Common myeloid progenitor, CD34-positive (primary cell): ENCODE measurements at regions of chr1 and their contacts with region 1.

Region 1: GRCh38 chr1:23800400-23801337 is at the start of gene GALE:
- DNase-seq: peak; percentile 95 to 97 (median 97)
- H3K4me3 ChIP-seq: peak within 1 kb of the TSS; percentile 57 to 89 (median 81)
- H3K27ac ChIP-seq: peak within 1 kb of the TSS; percentile 64 to 86
- H3K4me1 ChIP-seq: peaks cover 0 to 26% (median 21%) of the 10 kb centered on the region in 4 experiments
- H3K27me3 ChIP-seq: no peaks in the 10 kb centered on the region

Region 2: DNA sequence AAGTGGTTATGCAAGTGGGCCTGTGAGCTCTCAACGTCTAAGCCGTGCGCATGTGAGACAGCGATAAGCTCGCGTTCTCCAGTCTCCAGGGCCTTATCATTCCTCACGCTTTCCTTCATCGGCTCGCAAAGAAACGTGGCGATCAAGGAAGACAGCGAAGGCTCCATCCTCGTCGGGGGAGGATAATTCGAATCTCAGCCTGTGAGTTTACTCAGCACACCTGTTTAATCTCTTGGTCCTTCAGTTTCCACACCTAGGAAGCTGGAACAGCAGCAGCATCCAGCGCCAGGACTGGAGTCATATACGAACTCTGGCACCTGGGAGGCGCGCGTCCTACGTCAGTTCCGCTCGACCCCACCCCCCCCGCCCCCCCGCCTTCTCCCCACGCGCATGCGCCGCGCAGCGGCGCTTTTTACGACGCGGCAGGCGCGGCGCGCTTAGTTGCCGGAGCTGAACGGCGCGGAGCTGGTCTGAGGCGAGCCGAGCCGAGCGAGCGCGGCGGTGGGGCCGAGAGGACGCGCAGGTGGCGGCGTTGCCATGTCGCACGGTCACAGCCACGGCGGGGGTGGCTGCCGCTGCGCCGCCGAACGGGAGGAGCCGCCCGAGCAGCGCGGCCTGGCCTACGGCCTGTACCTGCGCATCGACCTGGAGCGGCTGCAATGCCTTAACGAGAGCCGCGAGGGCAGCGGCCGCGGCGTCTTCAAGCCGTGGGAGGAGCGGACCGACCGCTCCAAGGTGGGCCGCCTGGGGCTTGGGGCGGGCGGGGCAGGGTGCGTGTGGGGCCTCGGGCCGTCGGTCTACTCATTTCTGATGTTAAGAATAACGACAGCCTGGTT is 22.5 kb before region 1 on chr1 and contains the start of gene PITHD1:
- CTCF ChIA-PET with region 1: interaction called, 28 read pairs
- POLR2A ChIA-PET with region 1: interaction called, 6 read pairs
- DNase-seq: peak; percentile 90 to 94 (median 91)
- H3K4me3 ChIP-seq: peak within 1 kb of the TSS; percentile 81 to 95 (median 90)
- H3K27ac ChIP-seq: peak within 1 kb of the TSS; percentile 89 to 95
- H3K4me1 ChIP-seq: peaks cover 10 to 31% (median 19%) of the 10 kb centered on the region in 4 experiments
- H3K27me3 ChIP-seq: no peaks in the 10 kb centered on the region

Region 3: DNA sequence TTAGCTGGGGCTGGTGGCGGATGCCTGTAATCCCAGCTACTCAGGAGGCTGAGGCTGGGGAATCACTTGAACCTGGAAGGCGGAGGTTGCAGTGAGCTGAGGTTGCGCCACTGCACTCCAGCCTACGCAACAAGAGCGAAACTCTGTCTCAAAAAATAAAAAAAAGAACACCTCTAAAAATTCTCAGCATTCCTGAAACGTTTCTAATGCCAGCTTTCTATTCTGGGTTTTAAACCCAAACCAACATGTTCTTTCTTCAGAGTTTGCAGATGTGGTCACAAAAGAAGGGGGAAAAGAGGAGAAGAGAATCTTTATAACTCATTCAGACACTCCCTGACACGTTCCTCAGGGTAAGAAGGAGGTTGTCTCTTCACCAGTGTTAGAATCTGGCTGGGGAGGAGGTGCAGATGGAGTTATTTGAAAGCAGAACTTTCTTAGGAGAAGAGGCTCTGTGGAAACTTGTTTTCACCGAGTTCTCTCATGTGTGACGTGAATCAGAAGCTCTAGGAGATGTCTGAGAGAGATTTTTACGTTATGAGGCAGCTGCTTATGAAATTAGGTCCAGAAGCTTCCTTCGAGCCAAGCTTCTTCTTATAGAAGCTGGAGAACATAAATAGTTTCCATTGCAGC is 130.3 kb after region 1 on chr1:
- CTCF ChIA-PET with region 1: no interaction called
- POLR2A ChIA-PET with region 1: no interaction called
- DNase-seq: no peak
- H3K4me3 ChIP-seq: no peak overlapping the region
- H3K27ac ChIP-seq: no peak overlapping the region
- H3K4me1 ChIP-seq: no peaks in the 10 kb centered on the region
- H3K27me3 ChIP-seq: no peaks in the 10 kb centered on the region

Region 4: GRCh38 chr1:24009406-24009805 is 208.7 kb after region 1 on chr1:
- CTCF ChIA-PET with region 1: no interaction called
- POLR2A ChIA-PET with region 1: no interaction called
- DNase-seq: no peak
- H3K4me3 ChIP-seq: no peak overlapping the region
- H3K27ac ChIP-seq: no peak overlapping the region
- H3K4me1 ChIP-seq: no peaks in the 10 kb centered on the region
- H3K27me3 ChIP-seq: no peaks in the 10 kb centered on the region